GM10248 (cell line): ENCODE measurements at regions of chr1 and their contacts with region 1.

Region 1: DNA sequence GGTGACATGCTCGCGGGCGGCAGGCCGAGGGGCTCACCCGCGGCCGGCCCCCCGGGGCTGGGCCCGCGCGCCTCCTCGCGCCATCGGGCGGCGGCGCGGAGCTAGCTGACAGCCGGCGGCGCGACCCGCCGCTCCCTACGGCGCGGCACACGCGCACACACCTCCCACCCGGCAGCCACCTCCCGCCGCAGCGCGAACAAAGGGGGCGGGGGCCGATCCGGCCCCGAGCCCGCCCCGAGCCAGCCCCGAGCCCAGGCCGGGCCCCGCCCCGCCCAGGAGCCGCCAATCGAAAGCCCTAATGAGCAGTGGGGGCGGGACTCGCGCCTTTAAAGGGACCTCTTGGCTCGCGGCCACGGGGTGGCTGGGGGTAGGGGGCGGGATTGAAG is at the start of gene KIF21B:
- DNase-seq: peak; percentile 94
- CTCF ChIP-seq: no peak

Region 2: DNA sequence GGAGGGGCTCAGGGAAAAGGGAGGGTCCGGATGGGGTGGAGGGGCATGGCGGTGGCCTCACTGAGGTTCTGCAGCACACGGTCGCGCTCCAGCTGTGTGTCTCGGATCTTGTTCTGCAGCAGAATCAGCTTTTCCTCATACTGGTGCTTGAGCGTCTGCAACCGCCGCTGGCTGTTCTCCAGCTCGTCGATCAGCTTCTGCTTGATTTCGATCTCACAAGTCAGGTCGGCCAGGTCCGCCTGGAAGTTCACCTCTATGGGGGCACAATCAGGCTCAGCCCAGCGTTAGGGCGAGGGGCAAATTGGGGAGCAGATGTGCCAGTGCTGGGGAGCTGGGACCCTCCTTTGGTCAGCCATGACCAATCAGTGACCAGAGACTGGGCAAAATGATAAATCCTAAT is 25.2 kb before region 1 on chr1:
- CTCF ChIA-PET with region 1: interaction called, 10 read pairs
- POLR2A ChIA-PET with region 1: interaction called, 4 read pairs
- DNase-seq: no peak
- CTCF ChIP-seq: no peak

Region 3: GRCh38 chr1:201009962-201010645 is 13.4 kb before region 1 on chr1:
- CTCF ChIA-PET with region 1: interaction called, 34 read pairs
- POLR2A ChIA-PET with region 1: no interaction called
- DNase-seq: no peak
- CTCF ChIP-seq: no peak

Region 4: DNA sequence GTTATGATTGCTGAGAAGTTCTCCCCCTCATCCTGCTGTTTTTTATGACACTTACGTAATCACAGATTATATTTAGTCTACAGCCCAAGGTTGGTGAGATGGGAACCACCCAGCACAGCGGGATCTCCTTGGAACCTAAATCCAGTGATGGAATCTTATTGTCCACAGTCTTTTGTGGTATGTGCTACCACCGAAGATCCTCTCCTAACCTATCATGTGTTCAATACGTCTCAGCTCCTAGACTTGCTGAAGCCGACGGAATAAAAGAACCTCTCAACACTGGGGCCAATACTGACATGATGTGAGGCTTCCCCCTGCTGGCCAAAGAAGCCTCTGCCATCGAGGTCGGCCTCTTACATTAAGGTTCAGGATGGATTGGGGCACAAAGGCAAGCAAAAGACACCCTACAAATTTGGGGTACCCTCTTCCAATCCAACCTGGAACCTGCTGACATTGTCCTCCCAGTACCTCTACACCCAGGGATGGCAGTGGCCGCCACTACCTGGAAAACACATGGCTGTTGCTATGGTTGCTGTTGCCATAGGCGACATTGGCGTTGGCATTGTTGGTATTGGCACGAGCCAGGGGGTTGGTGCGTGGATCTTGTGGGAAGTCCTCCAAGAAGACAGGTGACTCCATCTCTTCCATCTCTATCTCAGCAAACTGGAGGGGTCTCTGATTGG is 19.4 kb after region 1 on chr1:
- CTCF ChIA-PET with region 1: interaction called, 182 read pairs
- POLR2A ChIA-PET with region 1: no interaction called
- DNase-seq: peak; percentile 79
- CTCF ChIP-seq: peak; percentile 94